Dorsolateral prefrontal cortex (tissue), 120 donors: ENCODE measurements at regions of chr6 and their contacts with region 1.

Region 1: DNA sequence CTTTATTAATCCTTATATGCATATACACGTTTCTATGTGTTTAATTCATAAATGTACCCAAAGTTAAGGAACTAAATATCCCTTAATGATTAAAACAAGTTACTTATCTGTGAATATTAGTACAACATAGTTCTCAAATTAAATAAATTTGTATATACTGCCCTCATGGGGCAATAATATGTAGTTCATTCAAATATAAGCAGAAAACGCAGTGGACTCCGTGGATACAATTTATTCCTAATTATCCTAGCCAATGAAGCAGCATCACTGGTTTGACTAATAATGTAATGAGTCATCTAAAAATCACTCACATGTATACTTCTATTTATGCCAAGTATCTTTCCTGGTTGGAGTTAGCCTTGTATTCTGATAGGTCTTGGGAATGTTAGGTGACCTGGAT is 111.6 kb downstream of the TBC1D32 start:
- DNase-seq: no peak
- H3K4me3 ChIP-seq: no peak overlapping the region
- H3K27ac ChIP-seq: no peak overlapping the region
- H3K27me3 ChIP-seq: no peaks in the 10 kb centered on the region
- CTCF ChIP-seq: peak in 53 of 56 donors; percentile 19 to 74 (median 49)

Region 2: GRCh38 chr6:121055572-121056163 is 167.0 kb before region 1 on chr6:
- intact Hi-C with region 1: loop called (anchors 2 to 10 kb)
- DNase-seq: no peak
- H3K4me3 ChIP-seq: no peak overlapping the region
- H3K27ac ChIP-seq: no peak overlapping the region
- H3K27me3 ChIP-seq: no peaks in the 10 kb centered on the region
- CTCF ChIP-seq: peak; percentile 41 to 85 (median 67)

Region 3: DNA sequence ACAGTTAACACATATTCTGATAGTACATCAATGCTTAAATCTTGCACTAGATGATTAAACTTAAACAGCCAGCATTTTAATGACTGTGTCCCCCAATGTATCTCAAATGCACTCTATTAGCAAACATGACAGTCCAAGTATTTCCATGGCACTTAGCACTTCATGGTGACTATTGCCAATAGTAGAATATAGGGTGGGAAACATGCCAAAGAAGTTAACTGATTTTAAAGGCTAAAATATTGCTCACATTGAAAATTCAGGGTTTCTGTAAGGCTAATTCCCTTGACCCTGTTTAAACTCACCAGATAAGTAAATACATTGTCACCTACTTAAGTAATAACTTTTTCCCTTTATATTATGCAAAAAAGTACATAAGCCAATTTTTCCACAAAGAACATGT is 155.3 kb before region 1 on chr6:
- intact Hi-C with region 1: loop called in 1 of 2 experiments (anchors 10 kb)
- DNase-seq: no peak
- H3K4me3 ChIP-seq: no peak overlapping the region
- H3K27ac ChIP-seq: no peak overlapping the region
- H3K27me3 ChIP-seq: no peaks in the 10 kb centered on the region
- CTCF ChIP-seq: no peak